Activated T-helper 1 cell treated with anti-CD3 and anti-CD28 coated beads, Interleukin-12 subunit alpha, Interleukin-12 subunit beta, Interleukin-2, Interleukin-4 antibody, amounts not matched to agents 30 ng/mL and 10 ng/mL and 1 ng/mL, durations not matched to agents 14 hours and 24 hours and 36 hours (primary cell): ENCODE measurements at regions of chr12 and their contacts with region 1.

Region 1: DNA sequence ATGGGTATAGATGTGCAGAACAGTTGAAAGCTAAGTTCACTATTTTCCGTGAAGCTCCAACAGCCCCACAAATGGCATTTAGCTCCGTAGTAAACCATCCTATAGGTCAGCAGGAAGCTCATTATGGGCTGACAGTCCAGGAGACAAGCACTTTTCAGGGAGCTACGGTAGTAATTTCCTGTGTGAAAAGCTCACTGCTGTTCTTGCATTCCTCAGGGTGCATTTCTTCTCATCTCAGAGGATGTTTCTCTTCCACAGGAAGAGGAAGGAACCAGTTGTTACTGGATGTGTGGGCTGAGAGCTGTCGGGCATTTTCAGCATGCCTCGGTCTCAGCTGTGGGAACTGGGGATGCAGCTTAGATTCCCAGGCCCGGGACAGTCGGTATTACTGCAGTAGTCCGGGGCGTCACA is 72.8 kb downstream of the GALNT4 start:
- DNase-seq: no peak
- H3K4me3 Mint-ChIP-seq: no peak overlapping the region
- H3K27ac Mint-ChIP-seq: no peak overlapping the region
- H3K4me1 Mint-ChIP-seq: peaks cover 44% of the 10 kb centered on the region
- H3K27me3 Mint-ChIP-seq: no peaks in the 10 kb centered on the region

Region 2: GRCh38 chr12:89384050-89384758 is 67.6 kb before region 1 on chr12:
- intact Hi-C with region 1: loop called (anchors 5 kb)
- DNase-seq: no peak
- H3K4me3 Mint-ChIP-seq: no peak overlapping the region
- H3K27ac Mint-ChIP-seq: no peak overlapping the region
- H3K4me1 Mint-ChIP-seq: peaks cover 21% of the 10 kb centered on the region
- H3K27me3 Mint-ChIP-seq: peaks cover 2% of the 10 kb centered on the region

Region 3: DNA sequence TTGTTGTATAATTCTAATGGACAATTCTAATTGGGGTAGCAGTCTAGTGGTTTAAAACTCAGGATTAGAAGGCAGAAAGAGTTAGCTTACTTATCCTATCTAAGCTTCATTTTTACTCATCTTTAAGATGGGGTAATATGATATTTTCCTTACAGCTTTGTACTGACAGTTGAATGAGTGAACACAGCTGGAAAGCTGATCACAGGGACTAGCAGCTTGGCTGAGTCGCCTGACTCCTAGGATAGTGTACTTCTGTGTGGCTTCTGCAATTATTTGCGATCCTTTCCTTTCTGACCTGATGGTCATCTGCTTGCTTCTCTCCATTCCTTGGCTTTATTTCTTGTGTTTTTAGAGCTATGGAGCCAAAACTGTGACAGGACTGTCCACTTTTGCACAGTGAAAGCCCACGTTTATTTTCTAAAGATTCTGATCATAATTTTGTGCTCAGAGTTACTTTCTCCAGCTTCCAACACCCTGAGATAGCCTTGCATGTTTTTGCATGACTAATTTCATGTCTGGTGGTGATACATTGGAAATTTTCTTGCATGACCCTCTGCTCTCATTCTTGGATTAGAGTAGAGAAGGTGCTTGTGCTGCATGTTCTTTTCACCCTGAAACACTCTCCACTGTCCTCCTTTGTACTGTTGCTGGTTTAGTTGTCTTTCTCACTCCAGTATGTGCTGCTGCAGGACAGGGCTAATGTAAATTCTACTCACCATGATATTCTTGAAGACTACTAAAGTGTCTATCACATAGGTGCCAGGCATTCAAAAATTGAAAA is 633.8 kb after region 1 on chr12:
- intact Hi-C with region 1: no loop called
- DNase-seq: no peak
- H3K4me3 Mint-ChIP-seq: no peak overlapping the region
- H3K27ac Mint-ChIP-seq: no peak overlapping the region
- H3K4me1 Mint-ChIP-seq: peaks cover 5% of the 10 kb centered on the region
- H3K27me3 Mint-ChIP-seq: peaks cover 2% of the 10 kb centered on the region

Region 4: GRCh38 chr12:91023326-91024004 is 1571.6 kb after region 1 on chr12:
- intact Hi-C with region 1: no loop called
- DNase-seq: no peak
- H3K4me3 Mint-ChIP-seq: no peak overlapping the region
- H3K27ac Mint-ChIP-seq: no peak overlapping the region
- H3K4me1 Mint-ChIP-seq: no peaks in the 10 kb centered on the region
- H3K27me3 Mint-ChIP-seq: no peaks in the 10 kb centered on the region